CD8-positive, alpha-beta T cell (primary cell): ENCODE measurements at regions of chr3 and their contacts with region 1.

Region 1: DNA sequence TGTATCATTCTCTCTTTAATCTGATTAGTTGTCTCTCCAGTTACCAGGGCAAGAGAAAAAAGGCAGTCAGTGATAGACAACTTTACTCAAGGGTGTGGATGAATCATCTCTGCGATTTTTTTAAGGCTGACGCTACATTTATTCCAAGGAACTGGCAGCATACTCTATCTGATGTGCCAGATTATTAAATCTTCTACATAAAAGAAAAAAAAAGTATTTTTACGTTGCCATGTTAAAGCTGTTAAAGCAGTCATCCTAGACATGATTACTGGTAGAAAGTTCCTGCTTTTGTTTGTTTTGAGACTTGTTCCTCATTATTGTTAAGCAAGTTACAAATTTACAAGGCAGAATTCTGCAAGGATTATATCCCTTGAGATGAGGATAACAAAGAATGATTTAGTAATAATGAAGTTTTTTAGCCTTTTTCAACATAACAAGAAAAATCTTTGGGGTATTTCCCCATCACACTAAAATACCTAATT is 121.7 kb downstream of the CBLB start:
- DNase-seq: peak in 2 of 9 experiments; percentile 69 to 86
- ATAC-seq: peak; percentile 85
- H3K4me3 ChIP-seq: no peak overlapping the region
- H3K4me3 Mint-ChIP-seq: peak overlapping the region; percentile 71
- H3K27ac ChIP-seq: peak overlapping the region in 1 of 2 experiments; percentile 85
- H3K27ac Mint-ChIP-seq: peak overlapping the region; percentile 86
- H3K4me1 ChIP-seq: peaks cover 82% of the 10 kb centered on the region
- H3K4me1 Mint-ChIP-seq: peaks cover 75% of the 10 kb centered on the region
- H3K27me3 ChIP-seq: no peaks in the 10 kb centered on the region
- H3K27me3 Mint-ChIP-seq: no peaks in the 10 kb centered on the region
- CTCF ChIP-seq: no peak

Region 2: DNA sequence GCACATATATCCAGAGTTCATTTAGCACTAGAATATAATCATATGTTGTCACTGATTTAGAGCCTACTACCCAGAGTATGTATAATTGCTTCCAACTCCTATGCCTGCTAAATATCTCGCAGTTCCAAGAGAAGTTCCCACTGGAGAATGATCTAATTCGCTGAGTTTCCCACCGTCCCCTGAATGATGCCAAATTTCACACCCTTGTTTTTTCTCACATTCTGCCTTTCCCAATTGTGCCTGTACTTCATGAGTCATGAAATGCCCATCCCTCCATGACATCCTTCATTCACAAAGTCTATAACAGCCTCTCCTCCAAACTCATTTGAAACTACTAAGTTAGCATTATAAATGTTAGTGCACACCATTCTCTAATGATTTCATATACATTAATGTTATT is 55.5 kb before region 1 on chr3:
- CTCF ChIA-PET with region 1: no interaction called
- POLR2A ChIA-PET with region 1: no interaction called
- intact Hi-C with region 1: loop called in 1 of 2 experiments (anchors 10 kb)
- DNase-seq: no peak
- ATAC-seq: no peak
- H3K4me3 ChIP-seq: no peak overlapping the region
- H3K4me3 Mint-ChIP-seq: no peak overlapping the region
- H3K27ac ChIP-seq: no peak overlapping the region
- H3K27ac Mint-ChIP-seq: peak overlapping the region; percentile 46
- H3K4me1 ChIP-seq: peaks cover 19% of the 10 kb centered on the region
- H3K4me1 Mint-ChIP-seq: peaks cover 45% of the 10 kb centered on the region
- H3K27me3 ChIP-seq: no peaks in the 10 kb centered on the region
- H3K27me3 Mint-ChIP-seq: no peaks in the 10 kb centered on the region
- CTCF ChIP-seq: no peak

Region 3: GRCh38 chr3:105715372-105715771 is 31.7 kb before region 1 on chr3:
- CTCF ChIA-PET with region 1: no interaction called
- POLR2A ChIA-PET with region 1: no interaction called
- intact Hi-C with region 1: loop called in 1 of 2 experiments (anchors 5 kb)
- DNase-seq: no peak
- ATAC-seq: no peak
- H3K4me3 ChIP-seq: no peak overlapping the region
- H3K4me3 Mint-ChIP-seq: no peak overlapping the region
- H3K27ac ChIP-seq: no peak overlapping the region
- H3K27ac Mint-ChIP-seq: no peak overlapping the region
- H3K4me1 ChIP-seq: no peaks in the 10 kb centered on the region
- H3K4me1 Mint-ChIP-seq: peaks cover 17% of the 10 kb centered on the region
- H3K27me3 ChIP-seq: no peaks in the 10 kb centered on the region
- H3K27me3 Mint-ChIP-seq: no peaks in the 10 kb centered on the region
- CTCF ChIP-seq: no peak

Region 4: DNA sequence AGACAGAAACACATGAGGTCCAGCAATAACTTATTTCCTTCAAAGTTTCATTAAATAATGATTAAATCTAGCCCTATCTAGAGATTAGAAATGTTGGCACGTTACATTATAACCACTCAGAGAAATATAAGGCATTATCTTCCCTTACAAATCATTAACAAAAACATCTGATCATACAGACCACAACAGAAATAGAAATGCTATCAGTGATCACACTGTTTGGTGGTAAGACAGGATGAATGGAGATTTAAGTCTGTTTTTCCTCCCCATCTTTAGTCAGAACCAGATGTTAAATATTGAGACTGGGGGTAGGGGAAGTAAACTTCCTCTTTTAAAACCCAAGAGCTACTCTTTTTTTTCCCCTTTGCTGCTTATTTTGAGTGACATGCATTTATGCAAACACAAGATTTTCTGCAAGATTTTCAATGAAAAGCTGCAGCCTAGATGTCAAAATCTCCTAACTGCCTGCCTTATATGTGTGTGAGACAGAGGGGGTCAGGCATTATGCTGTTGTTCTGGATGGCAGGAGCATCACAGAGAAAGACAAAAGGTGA is 51.4 kb after region 1 on chr3:
- CTCF ChIA-PET with region 1: interaction called, 3 read pairs
- POLR2A ChIA-PET with region 1: no interaction called
- intact Hi-C with region 1: loop called in 1 of 2 experiments (anchors 1 kb)
- DNase-seq: peak in 1 of 9 experiments; percentile 38
- ATAC-seq: peak; percentile 47
- H3K4me3 ChIP-seq: no peak overlapping the region
- H3K4me3 Mint-ChIP-seq: peak overlapping the region; percentile 23
- H3K27ac ChIP-seq: no peak overlapping the region
- H3K27ac Mint-ChIP-seq: peak overlapping the region; percentile 37
- H3K4me1 ChIP-seq: peaks cover 40% of the 10 kb centered on the region
- H3K4me1 Mint-ChIP-seq: peaks cover 85% of the 10 kb centered on the region
- H3K27me3 ChIP-seq: no peaks in the 10 kb centered on the region
- H3K27me3 Mint-ChIP-seq: no peaks in the 10 kb centered on the region
- CTCF ChIP-seq: no peak